ENCODE measurements at regions of chr14 and their contacts with region 1.

Region 1: DNA sequence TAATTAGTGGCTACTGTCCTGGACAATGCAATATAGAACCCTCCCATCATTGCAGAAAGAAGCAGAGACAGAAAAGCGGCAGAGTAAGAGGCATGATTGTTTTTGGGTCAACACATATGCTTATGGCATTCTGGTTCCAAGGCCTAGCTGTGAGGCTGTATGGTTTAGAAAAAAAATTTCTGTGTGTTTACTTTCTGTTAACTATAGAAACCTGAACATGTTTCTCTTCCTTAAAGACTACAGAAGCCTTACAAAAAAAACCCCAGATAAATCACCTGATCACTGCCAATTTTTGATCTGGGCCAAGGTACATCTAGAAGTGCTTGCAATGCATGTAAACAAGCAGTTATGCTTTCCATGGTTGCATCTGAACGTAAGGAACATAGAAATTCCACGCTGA is 100.0 kb upstream of the HECTD1 start:
- DNase-seq: no peak
- ATAC-seq: no peak
- H3K4me3 ChIP-seq: no peak overlapping the region
- H3K4me3 Mint-ChIP-seq: no peak overlapping the region
- H3K27ac ChIP-seq: no peak overlapping the region
- H3K27ac Mint-ChIP-seq: no peak overlapping the region
- H3K4me1 ChIP-seq: no peaks in the 10 kb centered on the region
- H3K4me1 Mint-ChIP-seq: no peaks in the 10 kb centered on the region
- H3K27me3 ChIP-seq: no peaks in the 10 kb centered on the region
- H3K27me3 Mint-ChIP-seq: no peaks in the 10 kb centered on the region

Region 2: GRCh38 chr14:30632730-30633129 is 674.9 kb before region 1 on chr14:
- CTCF ChIA-PET with region 1: no interaction called
- POLR2A ChIA-PET with region 1: interaction called in 1 of 2 experiments, 12 read pairs
- DNase-seq: no peak
- ATAC-seq: no peak
- H3K4me3 ChIP-seq: no peak overlapping the region
- H3K4me3 Mint-ChIP-seq: no peak overlapping the region
- H3K27ac ChIP-seq: no peak overlapping the region
- H3K27ac Mint-ChIP-seq: no peak overlapping the region
- H3K4me1 ChIP-seq: peaks cover 0 to 3% of the 10 kb centered on the region in 2 experiments
- H3K4me1 Mint-ChIP-seq: peaks cover 21 to 25% (median 24%) of the 10 kb centered on the region in 3 donors
- H3K27me3 ChIP-seq: no peaks in the 10 kb centered on the region
- H3K27me3 Mint-ChIP-seq: no peaks in the 10 kb centered on the region

Region 3: GRCh38 chr14:31038521-31039166 is 269.0 kb before region 1 on chr14:
- CTCF ChIA-PET with region 1: no interaction called
- POLR2A ChIA-PET with region 1: no interaction called
- DNase-seq: no peak
- ATAC-seq: no peak
- H3K4me3 ChIP-seq: no peak overlapping the region
- H3K4me3 Mint-ChIP-seq: no peak overlapping the region
- H3K27ac ChIP-seq: no peak overlapping the region
- H3K27ac Mint-ChIP-seq: no peak overlapping the region
- H3K4me1 ChIP-seq: no peaks in the 10 kb centered on the region
- H3K4me1 Mint-ChIP-seq: no peaks in the 10 kb centered on the region
- H3K27me3 ChIP-seq: no peaks in the 10 kb centered on the region
- H3K27me3 Mint-ChIP-seq: no peaks in the 10 kb centered on the region

Region 4: GRCh38 chr14:31568671-31569070 is 261.1 kb after region 1 on chr14:
- CTCF ChIA-PET with region 1: no interaction called
- POLR2A ChIA-PET with region 1: no interaction called
- DNase-seq: no peak
- ATAC-seq: no peak
- H3K4me3 ChIP-seq: no peak overlapping the region
- H3K4me3 Mint-ChIP-seq: no peak overlapping the region
- H3K27ac ChIP-seq: no peak overlapping the region
- H3K27ac Mint-ChIP-seq: no peak overlapping the region
- H3K4me1 ChIP-seq: no peaks in the 10 kb centered on the region
- H3K4me1 Mint-ChIP-seq: peaks cover 12 to 19% (median 14%) of the 10 kb centered on the region in 3 donors
- H3K27me3 ChIP-seq: no peaks in the 10 kb centered on the region
- H3K27me3 Mint-ChIP-seq: no peaks in the 10 kb centered on the region

Measured in T-cell (primary cell).